ENCODE measurements at regions of chr7 and their contacts with region 1.

Region 1: GRCh38 chr7:39580149-39580874 is 14.1 kb downstream of the YAE1 start:
- DNase-seq: peak; percentile 76
- ATAC-seq: peak; percentile 95
- H3K4me3 Mint-ChIP-seq: no peak overlapping the region
- H3K27ac Mint-ChIP-seq: 0 out of 2 replicates have a peak overlapping the region, but pooled peaks have one; percentile 66
- H3K4me1 Mint-ChIP-seq: peaks cover 23% of the 10 kb centered on the region
- H3K27me3 Mint-ChIP-seq: no peaks in the 10 kb centered on the region
- CTCF ChIP-seq: peak; percentile 78

Region 2: GRCh38 chr7:39541511-39541910 is 38.8 kb before region 1 on chr7:
- CTCF ChIA-PET with region 1: interaction called, 11 read pairs
- POLR2A ChIA-PET with region 1: no interaction called
- DNase-seq: no peak
- ATAC-seq: no peak
- H3K4me3 Mint-ChIP-seq: no peak overlapping the region
- H3K27ac Mint-ChIP-seq: no peak overlapping the region
- H3K4me1 Mint-ChIP-seq: peaks cover 13% of the 10 kb centered on the region
- H3K27me3 Mint-ChIP-seq: no peaks in the 10 kb centered on the region
- CTCF ChIP-seq: no peak

Region 3: GRCh38 chr7:39560997-39561396 is 19.3 kb before region 1 on chr7:
- CTCF ChIA-PET with region 1: no interaction called
- POLR2A ChIA-PET with region 1: no interaction called
- DNase-seq: no peak
- ATAC-seq: peak; percentile 62
- H3K4me3 Mint-ChIP-seq: no peak overlapping the region
- H3K27ac Mint-ChIP-seq: no peak overlapping the region
- H3K4me1 Mint-ChIP-seq: peaks cover 14% of the 10 kb centered on the region
- H3K27me3 Mint-ChIP-seq: no peaks in the 10 kb centered on the region; the same call in 1 of the 2 replicates
- CTCF ChIP-seq: no peak

Region 4: GRCh38 chr7:39623018-39623731 is 42.9 kb after region 1 on chr7 and contains the start of gene RALA:
- CTCF ChIA-PET with region 1: interaction called, 25 read pairs
- POLR2A ChIA-PET with region 1: interaction called, 11 read pairs
- DNase-seq: peak; percentile 92
- ATAC-seq: peak; percentile 96
- H3K4me3 Mint-ChIP-seq: peak within 1 kb of the TSS; percentile 91
- H3K27ac Mint-ChIP-seq: peak within 1 kb of the TSS; percentile 91
- H3K4me1 Mint-ChIP-seq: peaks cover 50% of the 10 kb centered on the region
- H3K27me3 Mint-ChIP-seq: no peaks in the 10 kb centered on the region
- CTCF ChIP-seq: no peak
- total RNA-seq, gene RALA: 57.3 to 59.8 TPM (median 59.3 TPM) in 3 replicates

Region 5: DNA sequence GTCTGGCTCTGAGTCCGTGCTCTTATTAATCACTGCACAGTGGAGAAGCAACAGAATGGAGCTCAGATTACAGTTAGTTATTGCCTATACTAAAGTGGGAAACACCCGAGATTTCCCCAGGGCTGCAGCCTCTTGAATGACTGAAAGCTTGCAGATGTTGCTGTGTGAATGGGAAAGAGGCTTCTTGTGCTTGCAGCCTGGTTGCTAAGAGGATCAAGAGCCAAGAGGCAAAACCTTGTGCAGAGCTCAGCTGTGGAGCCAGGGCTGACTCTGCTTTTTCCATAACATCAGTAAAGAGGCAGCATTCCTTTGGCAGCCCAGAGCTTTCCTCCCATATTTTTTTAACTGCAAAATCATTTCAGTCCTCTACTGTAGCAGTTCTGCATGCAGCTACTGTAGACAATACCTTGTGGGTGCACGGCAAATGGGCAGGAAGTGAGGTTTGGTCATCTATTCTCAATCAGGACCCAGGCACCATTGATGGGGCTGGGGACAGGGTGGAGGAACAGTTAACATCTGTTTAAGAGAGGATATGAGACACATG is 129.5 kb after region 1 on chr7:
- CTCF ChIA-PET with region 1: interaction called, 13 read pairs
- POLR2A ChIA-PET with region 1: no interaction called
- DNase-seq: no peak
- ATAC-seq: peak; percentile 44
- H3K4me3 Mint-ChIP-seq: no peak overlapping the region
- H3K27ac Mint-ChIP-seq: peak overlapping the region; percentile 14; the same call in 1 of the 2 replicates
- H3K4me1 Mint-ChIP-seq: peaks cover 7% of the 10 kb centered on the region
- H3K27me3 Mint-ChIP-seq: peaks cover 6% of the 10 kb centered on the region
- CTCF ChIP-seq: no peak

Region 6: GRCh38 chr7:39746103-39746819 is 165.9 kb after region 1 on chr7:
- CTCF ChIA-PET with region 1: interaction called, 378 read pairs
- POLR2A ChIA-PET with region 1: interaction called, 4 read pairs
- DNase-seq: peak; percentile 85
- ATAC-seq: peak; percentile 63
- H3K4me3 Mint-ChIP-seq: no peak overlapping the region
- H3K27ac Mint-ChIP-seq: no peak overlapping the region; the same call in 1 of the 2 replicates
- H3K4me1 Mint-ChIP-seq: peaks cover 42% of the 10 kb centered on the region
- H3K27me3 Mint-ChIP-seq: no peaks in the 10 kb centered on the region
- CTCF ChIP-seq: peak; percentile 31; the same call in 1 of the 2 replicates

Region 7: DNA sequence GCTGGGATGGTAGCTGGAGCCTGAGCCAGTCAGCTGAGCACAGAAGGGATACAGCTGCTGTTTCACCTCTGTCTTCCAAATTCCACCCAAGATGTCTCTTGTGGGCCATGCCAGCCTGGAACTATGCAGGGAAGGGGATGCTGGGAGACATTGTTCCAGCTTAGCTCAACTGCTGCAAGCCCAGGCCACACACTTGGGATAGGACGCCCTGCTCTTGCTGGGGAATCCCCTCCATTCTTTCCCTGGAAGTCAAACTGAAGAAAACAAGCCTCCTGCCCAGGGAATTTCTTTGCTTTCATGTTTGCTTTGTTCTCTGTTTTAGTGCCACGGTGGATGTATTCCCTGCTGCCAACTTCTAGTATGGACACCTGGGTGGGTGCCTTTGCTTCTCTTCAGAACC is 314.6 kb after region 1 on chr7:
- CTCF ChIA-PET with region 1: interaction called, 10 read pairs
- POLR2A ChIA-PET with region 1: no interaction called
- DNase-seq: no peak
- ATAC-seq: no peak
- H3K4me3 Mint-ChIP-seq: no peak overlapping the region
- H3K27ac Mint-ChIP-seq: no peak overlapping the region
- H3K4me1 Mint-ChIP-seq: peaks cover 7% of the 10 kb centered on the region; the same call in 1 of the 2 replicates
- H3K27me3 Mint-ChIP-seq: no peaks in the 10 kb centered on the region
- CTCF ChIP-seq: no peak